CD14-positive monocyte (primary cell): ENCODE measurements at regions of chr6 and their contacts with region 1.

Region 1: DNA sequence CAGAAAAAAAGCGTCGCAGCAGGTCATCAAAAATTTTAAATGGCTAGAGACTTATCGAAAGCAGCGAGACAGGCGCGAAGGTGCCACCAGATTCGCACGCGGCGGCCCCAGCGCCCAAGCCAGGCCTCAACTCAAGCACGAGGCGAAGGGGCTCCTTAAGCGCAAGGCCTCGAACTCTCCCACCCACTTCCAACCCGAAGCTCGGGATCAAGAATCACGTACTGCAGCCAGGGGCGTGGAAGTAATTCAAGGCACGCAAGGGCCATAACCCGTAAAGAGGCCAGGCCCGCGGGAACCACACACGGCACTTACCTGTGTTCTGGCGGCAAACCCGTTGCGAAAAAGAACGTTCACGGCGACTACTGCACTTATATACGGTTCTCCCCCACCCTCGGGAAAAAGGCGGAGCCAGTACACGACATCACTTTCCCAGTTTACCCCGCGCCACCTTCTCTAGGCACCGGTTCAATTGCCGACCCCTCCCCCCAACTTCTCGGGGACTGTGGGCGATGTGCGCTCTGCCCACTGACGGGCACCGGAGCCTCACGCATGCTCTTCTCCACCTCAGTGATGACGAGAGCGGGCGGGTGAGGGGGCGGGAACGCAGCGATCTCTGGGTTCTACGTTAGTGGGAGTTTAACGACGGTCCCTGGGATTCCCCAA is at the start of gene EEF1A1:
- DNase-seq: peak; percentile 99 to 100 (median 100)
- H3K4me3 ChIP-seq: peak within 1 kb of the TSS; percentile 69 to 99 (median 98)
- H3K4me3 Mint-ChIP-seq: peak within 1 kb of the TSS; percentile 95 to 96
- H3K27ac ChIP-seq: peak within 1 kb of the TSS; percentile 99 to 100
- H3K27ac Mint-ChIP-seq: peak within 1 kb of the TSS; percentile 96 to 100 (median 99)
- H3K4me1 ChIP-seq: peaks cover 51 to 63% of the 10 kb centered on the region in 2 donors
- H3K4me1 Mint-ChIP-seq: peaks cover 49% of the 10 kb centered on the region
- H3K27me3 ChIP-seq: no peaks in the 10 kb centered on the region
- H3K27me3 Mint-ChIP-seq: peaks cover 0 to 3% (median 3%) of the 10 kb centered on the region in 3 donors
- CTCF ChIP-seq: no peak
- polyA plus RNA-seq, gene EEF1A1: 5,292 to 7,368 (median 5,586) TPM

Region 2: DNA sequence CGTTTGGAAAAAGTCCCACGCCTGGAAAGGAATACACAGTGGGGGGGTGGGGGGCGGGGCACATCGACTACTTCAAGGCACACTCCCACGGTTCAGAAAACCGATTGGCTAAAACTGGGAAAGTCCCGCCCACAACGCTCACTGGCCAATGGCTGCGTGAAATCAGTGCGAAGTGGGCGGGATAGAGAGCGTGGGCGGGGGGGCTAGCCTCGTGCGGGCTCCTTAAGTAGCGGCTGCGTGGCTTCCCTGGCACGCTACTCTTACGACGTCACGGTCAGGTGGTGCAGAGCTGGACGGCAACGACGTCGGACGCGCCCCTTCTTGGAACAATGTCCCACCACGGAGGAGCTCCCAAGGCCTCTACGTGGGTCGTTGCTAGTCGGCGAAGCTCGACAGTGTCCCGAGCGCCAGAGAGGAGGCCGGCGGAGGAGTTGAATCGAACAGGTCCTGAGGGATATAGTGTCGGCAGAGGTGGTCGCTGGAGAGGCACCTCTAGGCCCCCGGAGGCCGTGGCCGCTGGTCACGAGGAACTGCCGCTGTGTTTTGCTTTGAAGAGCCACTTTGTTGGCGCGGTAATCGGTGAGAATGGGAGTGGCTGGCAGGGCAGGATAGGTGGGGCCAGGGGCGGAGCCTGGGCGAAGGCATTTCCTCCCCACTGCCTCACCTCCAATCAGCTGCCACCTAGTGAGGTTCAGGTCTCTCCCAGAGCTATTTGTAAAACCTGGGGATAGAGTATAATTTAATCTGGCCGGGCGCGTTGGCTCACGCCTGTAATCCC is 126.1 kb before region 1 on chr6 and contains the start of gene DDX43:
- intact Hi-C with region 1: no loop called
- DNase-seq: peak; percentile 29 to 74 (median 67)
- H3K4me3 ChIP-seq: peak within 1 kb of the TSS in 1 of 3 experiments; percentile 14
- H3K4me3 Mint-ChIP-seq: peak within 1 kb of the TSS; percentile 80 to 86
- H3K27ac ChIP-seq: peak within 1 kb of the TSS in 1 of 2 donors; percentile 27
- H3K27ac Mint-ChIP-seq: peak within 1 kb of the TSS in 6 of 7 donors; percentile 15 to 98 (median 92)
- H3K4me1 ChIP-seq: no peaks in the 10 kb centered on the region
- H3K4me1 Mint-ChIP-seq: peaks cover 8% of the 10 kb centered on the region
- H3K27me3 ChIP-seq: no peaks in the 10 kb centered on the region
- H3K27me3 Mint-ChIP-seq: peaks cover 0 to 2% (median 0%) of the 10 kb centered on the region in 3 donors
- CTCF ChIP-seq: no peak
- polyA plus RNA-seq, gene DDX43: 0.23 to 1.0 TPM in 2 of 3 donors, not detected in the other

Region 3: GRCh38 chr6:73461537-73462350 is 59.1 kb before region 1 on chr6 and contains the start of gene MTO1:
- intact Hi-C with region 1: loop called in 1 of 2 experiments (anchors 10 kb)
- DNase-seq: peak; percentile 88 to 92 (median 90)
- H3K4me3 ChIP-seq: peak within 1 kb of the TSS; percentile 70 to 97 (median 97)
- H3K4me3 Mint-ChIP-seq: peak within 1 kb of the TSS; percentile 99 to 100
- H3K27ac ChIP-seq: peak within 1 kb of the TSS; percentile 97 to 100
- H3K27ac Mint-ChIP-seq: peak within 1 kb of the TSS; percentile 97 to 100 (median 99)
- H3K4me1 ChIP-seq: peaks cover 42 to 53% of the 10 kb centered on the region in 2 donors
- H3K4me1 Mint-ChIP-seq: peaks cover 40% of the 10 kb centered on the region
- H3K27me3 ChIP-seq: no peaks in the 10 kb centered on the region
- H3K27me3 Mint-ChIP-seq: peaks cover 0 to 2% (median 0%) of the 10 kb centered on the region in 3 donors
- CTCF ChIP-seq: no peak
- polyA plus RNA-seq, gene MTO1: 8.0 to 22.8 (median 14.4) TPM

Region 4: DNA sequence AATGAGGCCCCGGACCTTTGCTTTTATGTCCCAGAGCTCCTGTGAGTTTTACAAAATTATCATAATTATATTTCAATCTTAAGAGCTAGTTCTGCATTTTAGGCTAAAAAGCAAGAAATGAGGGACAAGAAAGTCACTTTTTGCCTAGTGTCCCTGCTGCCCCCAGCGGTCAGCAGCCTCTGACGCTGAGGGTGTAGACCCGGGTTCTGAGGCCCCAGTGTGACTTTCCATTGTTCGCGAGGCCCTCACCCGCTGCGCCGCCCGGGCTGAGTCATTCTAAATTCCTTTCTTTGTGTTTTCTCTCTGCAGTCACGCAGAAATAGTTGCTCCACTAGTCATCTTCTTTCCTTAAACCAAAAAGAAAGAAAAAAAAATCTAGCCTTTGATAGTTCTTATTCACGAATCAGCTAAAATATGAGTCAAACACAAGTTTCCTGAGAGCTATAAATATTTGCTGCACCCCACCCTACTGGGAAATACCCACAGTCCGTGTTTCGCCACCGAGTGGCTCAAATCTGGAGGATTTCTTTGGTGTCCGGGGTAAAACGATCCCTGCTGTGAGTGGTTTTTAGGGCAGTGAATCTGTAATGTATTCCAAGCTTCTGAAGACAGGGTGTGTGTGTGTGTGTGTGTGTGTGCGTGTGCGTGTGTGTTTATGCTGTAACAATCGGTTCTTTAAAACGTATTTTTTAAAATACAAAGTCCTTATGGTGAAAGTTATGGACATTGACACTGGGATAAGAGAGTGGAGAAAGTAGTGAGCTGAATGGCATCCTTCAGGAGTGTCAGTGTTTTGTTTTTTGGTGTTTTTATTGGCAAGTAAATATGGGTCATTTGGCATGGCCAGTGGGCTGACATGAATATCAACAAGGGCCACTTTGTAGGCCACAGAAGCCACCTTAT is 59.7 kb after region 1 on chr6:
- intact Hi-C with region 1: loop called (anchors 2 kb)
- DNase-seq: peak; percentile 96 to 97 (median 97)
- H3K4me3 ChIP-seq: peak overlapping the region; percentile 23 to 62 (median 24)
- H3K4me3 Mint-ChIP-seq: peak overlapping the region; percentile 62 to 80
- H3K27ac ChIP-seq: peak overlapping the region; percentile 96 to 99
- H3K27ac Mint-ChIP-seq: peak overlapping the region; percentile 96 to 100 (median 99)
- H3K4me1 ChIP-seq: peaks cover 48 to 59% of the 10 kb centered on the region in 2 donors
- H3K4me1 Mint-ChIP-seq: peaks cover 50% of the 10 kb centered on the region
- H3K27me3 ChIP-seq: no peaks in the 10 kb centered on the region
- H3K27me3 Mint-ChIP-seq: no peaks in the 10 kb centered on the region
- CTCF ChIP-seq: peak; percentile 45

Region 5: DNA sequence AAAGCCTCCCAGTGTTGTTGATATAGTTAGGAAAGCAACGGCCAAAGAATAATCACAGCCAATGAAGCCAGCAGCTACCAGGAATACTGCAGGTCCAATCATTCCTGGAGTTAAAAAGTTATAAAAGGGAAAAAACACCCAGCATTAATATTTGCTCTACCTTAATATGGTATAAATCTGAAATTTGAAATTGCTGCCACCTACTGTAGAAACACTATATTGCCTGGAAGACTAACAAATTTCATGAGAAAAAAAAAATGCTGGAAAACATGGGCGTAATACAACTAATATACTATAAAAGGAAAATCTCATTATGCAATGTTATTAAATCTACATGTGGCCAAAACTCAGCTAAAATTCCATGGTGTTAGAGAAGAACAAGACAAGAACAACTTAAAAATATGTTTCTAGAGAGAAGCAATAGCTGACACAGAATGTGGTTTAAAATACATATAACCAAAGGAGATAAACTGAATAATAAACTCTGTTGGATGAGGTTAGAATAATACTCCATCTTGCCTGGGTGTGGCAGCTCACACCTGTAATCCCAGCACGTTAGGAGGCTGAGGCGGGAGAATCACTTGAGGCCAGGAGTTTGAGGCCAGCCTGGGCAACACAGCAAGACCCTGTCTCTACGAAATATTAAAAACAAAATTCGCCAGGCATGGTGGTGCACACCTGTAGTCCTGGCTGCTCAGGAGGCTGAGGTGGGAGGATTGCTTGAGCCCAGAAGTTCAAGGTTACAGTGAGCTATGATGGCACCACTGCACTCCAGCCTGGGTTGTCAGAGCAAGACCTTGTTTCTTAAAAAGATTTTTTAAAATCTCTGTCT is 89.8 kb after region 1 on chr6:
- intact Hi-C with region 1: loop called in 1 of 2 experiments (anchors 5 kb)
- DNase-seq: peak; percentile 32 to 70 (median 41)
- H3K4me3 ChIP-seq: no peak overlapping the region
- H3K4me3 Mint-ChIP-seq: no peak overlapping the region
- H3K27ac ChIP-seq: no peak overlapping the region
- H3K27ac Mint-ChIP-seq: peak overlapping the region in 5 of 7 donors; percentile 47 to 89 (median 78)
- H3K4me1 ChIP-seq: no peaks in the 10 kb centered on the region
- H3K4me1 Mint-ChIP-seq: no peaks in the 10 kb centered on the region
- H3K27me3 ChIP-seq: no peaks in the 10 kb centered on the region
- H3K27me3 Mint-ChIP-seq: no peaks in the 10 kb centered on the region
- CTCF ChIP-seq: peak; percentile 76

Region 6: DNA sequence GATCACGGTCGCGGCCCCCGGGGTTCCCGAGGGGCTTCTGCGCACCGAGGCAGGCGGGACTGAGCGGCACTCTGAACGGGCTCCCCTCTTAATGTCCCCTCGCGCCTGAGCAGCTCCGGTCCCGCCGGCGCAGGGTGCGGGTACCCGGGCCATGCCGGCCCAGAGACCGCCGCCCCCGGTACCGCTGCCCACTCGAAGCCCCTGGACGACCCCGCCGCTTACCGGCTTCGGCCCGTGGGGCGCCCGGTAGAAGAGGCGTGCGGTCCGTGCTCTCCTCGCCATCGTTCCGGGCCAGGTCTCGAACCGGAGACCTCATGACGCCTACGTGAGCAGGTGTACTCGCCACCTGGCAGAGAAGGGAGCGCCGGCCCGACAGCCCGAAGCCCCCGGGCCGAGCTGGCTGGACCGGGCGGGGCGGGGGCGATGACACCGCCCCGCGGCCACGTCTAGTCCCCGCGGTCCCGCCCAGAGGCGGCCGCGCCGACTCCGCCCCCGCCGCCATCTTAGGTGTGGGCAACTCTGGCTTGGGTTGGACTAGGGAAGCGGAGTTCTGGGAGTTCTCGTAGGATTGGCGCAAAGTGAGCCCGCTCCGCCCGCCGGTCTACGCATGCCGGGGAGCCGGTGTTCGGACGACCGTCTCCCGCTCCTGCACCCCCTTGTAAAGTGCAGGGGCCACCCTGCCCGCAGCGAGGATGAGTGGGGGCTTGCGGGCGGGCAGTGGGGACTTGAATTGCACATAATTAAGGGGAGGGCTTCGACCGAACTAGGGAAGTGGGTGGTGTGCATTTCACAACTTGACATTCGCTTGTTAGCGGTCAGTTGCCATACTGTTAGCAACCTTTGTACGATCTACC is 133.0 kb after region 1 on chr6 and contains the start of gene SLC17A5:
- intact Hi-C with region 1: loop called (anchors 2 to 5 kb)
- DNase-seq: peak; percentile 94 to 95 (median 95)
- H3K4me3 ChIP-seq: peak within 1 kb of the TSS; percentile 80 to 92 (median 87)
- H3K4me3 Mint-ChIP-seq: peak within 1 kb of the TSS; percentile 90 to 98
- H3K27ac ChIP-seq: peak within 1 kb of the TSS; percentile 99 to 100
- H3K27ac Mint-ChIP-seq: peak within 1 kb of the TSS; percentile 97 to 99 (median 98)
- H3K4me1 ChIP-seq: peaks cover 14 to 21% of the 10 kb centered on the region in 2 donors
- H3K4me1 Mint-ChIP-seq: peaks cover 18% of the 10 kb centered on the region
- H3K27me3 ChIP-seq: no peaks in the 10 kb centered on the region
- H3K27me3 Mint-ChIP-seq: peaks cover 0 to 2% (median 0%) of the 10 kb centered on the region in 3 donors
- CTCF ChIP-seq: no peak
- polyA plus RNA-seq, gene SLC17A5: 5.3 to 11.6 (median 9.4) TPM